Activated T-helper 1 cell treated with anti-CD3 and anti-CD28 coated beads, Interleukin-12 subunit alpha, Interleukin-12 subunit beta, Interleukin-2, Interleukin-4 antibody, amounts not matched to agents 30 ng/mL and 10 ng/mL and 1 ng/mL, durations not matched to agents 14 hours and 24 hours and 36 hours (primary cell): ENCODE measurements at regions of chr10 and their contacts with region 1.

Region 1: GRCh38 chr10:118543714-118544400 is 51.6 kb downstream of the PRLHR start:
- DNase-seq: peak; percentile 35
- H3K4me3 Mint-ChIP-seq: no peak overlapping the region
- H3K27ac Mint-ChIP-seq: no peak overlapping the region
- H3K4me1 Mint-ChIP-seq: no peaks in the 10 kb centered on the region
- H3K27me3 Mint-ChIP-seq: peaks cover 20% of the 10 kb centered on the region

Region 2: DNA sequence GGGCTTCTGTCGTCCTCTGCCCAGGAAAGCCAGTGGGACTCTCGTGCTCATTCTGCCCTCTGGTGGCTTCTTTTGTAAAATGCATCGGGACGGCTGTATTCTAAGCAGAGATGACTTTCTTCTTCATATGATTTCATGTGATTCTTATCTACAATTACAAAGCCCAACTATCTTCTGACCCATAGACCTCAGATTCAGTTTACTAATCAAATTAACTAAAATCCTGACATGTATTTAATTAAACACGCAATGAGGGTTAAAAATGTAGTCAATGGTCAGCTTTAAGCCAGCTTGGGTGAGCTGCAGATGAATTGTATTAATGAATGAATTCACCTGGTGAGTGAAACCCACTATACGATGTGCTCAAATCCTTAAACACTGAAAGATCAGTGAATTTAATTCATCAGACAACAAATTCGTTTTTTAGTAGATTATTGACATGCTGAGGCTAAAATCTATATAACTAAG is 84.1 kb before region 1 on chr10:
- intact Hi-C with region 1: loop called (anchors 1 kb)
- DNase-seq: peak; percentile 29
- H3K4me3 Mint-ChIP-seq: no peak overlapping the region
- H3K27ac Mint-ChIP-seq: no peak overlapping the region
- H3K4me1 Mint-ChIP-seq: peaks cover 6% of the 10 kb centered on the region
- H3K27me3 Mint-ChIP-seq: peaks cover 17% of the 10 kb centered on the region

Region 3: GRCh38 chr10:119596537-119597404 is 1052.9 kb after region 1 on chr10 and contains the start of gene TIAL1:
- intact Hi-C with region 1: no loop called
- DNase-seq: peak; percentile 92
- H3K4me3 Mint-ChIP-seq: peak within 1 kb of the TSS; percentile 91
- H3K27ac Mint-ChIP-seq: peak within 1 kb of the TSS; percentile 98
- H3K4me1 Mint-ChIP-seq: peaks cover 51% of the 10 kb centered on the region
- H3K27me3 Mint-ChIP-seq: no peaks in the 10 kb centered on the region
- total RNA-seq, gene TIAL1: 192 and 195 TPM in 2 replicates